ENCODE measurements at regions of chr20 and their contacts with region 1.

Region 1: DNA sequence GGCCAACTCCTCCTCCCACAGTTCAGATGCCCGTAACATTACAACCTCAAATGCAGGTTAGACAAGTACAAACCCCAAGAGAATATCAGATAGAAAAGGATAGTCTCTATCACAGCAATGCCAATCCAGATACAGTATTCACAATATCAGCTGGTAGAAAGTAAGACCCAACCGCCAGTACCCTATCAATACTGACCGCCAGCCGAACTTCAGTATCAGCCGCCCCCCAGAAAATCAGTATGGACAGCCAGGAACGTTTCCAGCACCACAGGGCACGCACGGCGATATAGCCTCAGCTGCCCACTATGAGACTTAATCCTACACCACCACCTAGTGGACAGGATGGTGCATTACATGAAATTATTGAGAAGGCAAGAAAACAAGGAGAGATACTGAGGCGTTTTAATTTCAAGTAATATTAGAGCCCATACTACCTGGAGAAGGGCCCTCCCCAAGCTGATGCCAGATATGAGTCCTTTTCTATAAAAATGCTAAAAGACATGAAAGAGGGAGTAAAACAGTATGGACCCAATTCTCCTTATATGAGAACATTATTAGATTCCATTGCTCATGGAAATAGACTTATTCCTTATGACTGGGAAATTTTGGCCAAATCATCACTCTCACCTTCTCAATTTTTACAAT is 17.6 kb upstream of the EIF2S2 start:
- DNase-seq: peak; percentile 83 to 91
- H3K4me3 ChIP-seq: peak overlapping the region; percentile 7; the same call in 1 of the 2 replicates
- H3K4me3 Mint-ChIP-seq: peak overlapping the region; percentile 41
- H3K27ac Mint-ChIP-seq: no peak overlapping the region
- H3K4me1 ChIP-seq: peaks cover 20% of the 10 kb centered on the region
- H3K4me1 Mint-ChIP-seq: peaks cover 26% of the 10 kb centered on the region
- H3K27me3 ChIP-seq: no peaks in the 10 kb centered on the region
- H3K27me3 Mint-ChIP-seq: peaks cover 3% of the 10 kb centered on the region
- CTCF ChIP-seq: peak; percentile 96 to 98

Region 2: DNA sequence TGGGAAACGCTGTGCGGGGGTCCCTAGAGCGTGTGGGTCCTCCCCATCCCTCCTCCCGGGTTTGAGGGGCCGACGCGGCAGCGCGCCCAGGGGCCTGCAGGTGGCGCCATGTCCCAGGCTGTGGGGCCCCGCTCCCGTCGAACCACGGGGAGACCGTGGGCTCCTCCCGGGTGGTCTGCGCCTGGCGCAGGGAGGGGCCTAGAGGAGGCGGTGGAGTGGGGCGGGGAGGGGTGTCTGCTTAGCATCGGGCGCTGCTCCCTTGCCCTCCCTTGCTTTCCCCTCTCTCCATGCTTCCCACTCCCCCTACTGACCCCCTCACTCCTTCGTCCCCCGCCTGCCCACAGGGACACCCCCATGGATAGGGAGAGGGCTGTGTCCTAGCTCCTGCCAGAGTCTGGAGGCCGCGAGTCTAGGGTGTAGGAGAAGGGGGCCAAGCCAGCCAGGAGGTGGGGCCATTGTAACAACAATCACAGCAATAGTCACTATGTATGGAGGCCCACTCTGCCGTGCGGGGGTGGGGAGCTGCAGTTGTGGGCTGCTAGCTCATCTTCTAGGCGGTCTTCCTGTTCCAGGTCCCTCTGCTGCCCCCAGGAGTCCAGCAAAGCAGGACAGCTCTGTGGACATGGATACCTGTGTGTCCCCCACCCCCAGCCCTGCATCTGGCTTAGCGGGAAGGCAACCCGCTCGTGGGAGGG is 266.8 kb before region 1 on chr20:
- CTCF ChIA-PET with region 1: no interaction called
- POLR2A ChIA-PET with region 1: no interaction called
- intact Hi-C with region 1: loop called (anchors 2 kb)
- DNase-seq: peak; percentile 77 to 83
- H3K4me3 ChIP-seq: no peak overlapping the region
- H3K4me3 Mint-ChIP-seq: no peak overlapping the region
- H3K27ac Mint-ChIP-seq: no peak overlapping the region
- H3K4me1 ChIP-seq: no peaks in the 10 kb centered on the region; the same call in 1 of the 2 replicates
- H3K4me1 Mint-ChIP-seq: peaks cover 12% of the 10 kb centered on the region
- H3K27me3 ChIP-seq: no peaks in the 10 kb centered on the region
- H3K27me3 Mint-ChIP-seq: no peaks in the 10 kb centered on the region
- CTCF ChIP-seq: peak; percentile 60 to 75

Region 3: DNA sequence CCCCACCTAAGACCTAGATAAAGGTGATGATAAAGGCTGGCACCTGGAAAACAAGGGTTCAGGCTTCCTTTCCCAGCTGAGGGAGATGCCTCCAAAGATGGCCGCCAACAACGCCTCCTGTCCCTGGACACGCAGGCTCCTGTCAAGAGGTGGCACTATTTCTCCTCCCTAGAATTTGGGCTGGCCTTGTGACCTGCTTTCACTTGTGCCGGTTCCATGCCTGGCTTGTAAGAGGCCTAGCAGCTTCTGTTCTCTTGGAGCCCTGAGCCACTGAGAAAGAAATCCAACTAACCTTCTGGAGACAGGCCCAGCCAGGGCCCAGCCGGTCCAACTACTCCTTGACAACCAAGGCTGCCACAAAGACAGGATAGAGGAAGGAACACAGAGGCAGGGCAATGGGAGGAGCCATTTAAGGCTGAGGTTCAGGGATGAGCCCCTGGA is 196.2 kb before region 1 on chr20:
- CTCF ChIA-PET with region 1: no interaction called
- POLR2A ChIA-PET with region 1: no interaction called
- intact Hi-C with region 1: loop called (anchors 1 kb)
- DNase-seq: peak; percentile 81 to 86
- H3K4me3 ChIP-seq: no peak overlapping the region
- H3K4me3 Mint-ChIP-seq: no peak overlapping the region
- H3K27ac Mint-ChIP-seq: no peak overlapping the region
- H3K4me1 ChIP-seq: no peaks in the 10 kb centered on the region
- H3K4me1 Mint-ChIP-seq: no peaks in the 10 kb centered on the region
- H3K27me3 ChIP-seq: no peaks in the 10 kb centered on the region
- H3K27me3 Mint-ChIP-seq: no peaks in the 10 kb centered on the region
- CTCF ChIP-seq: peak; percentile 56 to 88

Region 4: GRCh38 chr20:34088305-34089174 is 41.1 kb before region 1 on chr20:
- CTCF ChIA-PET with region 1: interaction called, 7 read pairs
- POLR2A ChIA-PET with region 1: no interaction called
- intact Hi-C with region 1: loop called (anchors 1 kb)
- DNase-seq: peak in 1 of 2 experiments; percentile 35
- H3K4me3 ChIP-seq: no peak overlapping the region
- H3K4me3 Mint-ChIP-seq: no peak overlapping the region
- H3K27ac Mint-ChIP-seq: no peak overlapping the region
- H3K4me1 ChIP-seq: no peaks in the 10 kb centered on the region
- H3K4me1 Mint-ChIP-seq: no peaks in the 10 kb centered on the region
- H3K27me3 ChIP-seq: no peaks in the 10 kb centered on the region
- H3K27me3 Mint-ChIP-seq: no peaks in the 10 kb centered on the region
- CTCF ChIP-seq: no peak

Region 5: GRCh38 chr20:34150306-34151000 is 20.8 kb after region 1 on chr20:
- CTCF ChIA-PET with region 1: no interaction called
- POLR2A ChIA-PET with region 1: no interaction called
- intact Hi-C with region 1: no loop called
- DNase-seq: no peak
- H3K4me3 ChIP-seq: no peak overlapping the region
- H3K4me3 Mint-ChIP-seq: no peak overlapping the region
- H3K27ac Mint-ChIP-seq: no peak overlapping the region
- H3K4me1 ChIP-seq: peaks cover 5% of the 10 kb centered on the region
- H3K4me1 Mint-ChIP-seq: no peaks in the 10 kb centered on the region
- H3K27me3 ChIP-seq: no peaks in the 10 kb centered on the region
- H3K27me3 Mint-ChIP-seq: no peaks in the 10 kb centered on the region
- CTCF ChIP-seq: no peak

Measured in Caco-2 (cell line).